Transverse colon (tissue), 4 donors: ENCODE measurements at regions of chr3 and their contacts with region 1.

Region 1: GRCh38 chr3:156674046-156674910 is at the start of gene TIPARP:
- DNase-seq: peak; percentile 100
- H3K4me3 ChIP-seq: peak within 1 kb of the TSS; percentile 69 to 98 (median 86)
- H3K27ac ChIP-seq: peak within 1 kb of the TSS; percentile 97 to 100 (median 99)
- H3K4me1 ChIP-seq: peaks cover 12 to 53% (median 23%) of the 10 kb centered on the region in 4 donors
- H3K27me3 ChIP-seq: no peaks in the 10 kb centered on the region
- CTCF ChIP-seq: peak; percentile 54 to 91 (median 71)
- EP300 ChIP-seq: peak; percentile 67
- POLR2A ChIP-seq: peak; percentile 100
- total RNA-seq, gene TIPARP: 11.9 to 47.1 (median 34.3) TPM

Region 2: DNA sequence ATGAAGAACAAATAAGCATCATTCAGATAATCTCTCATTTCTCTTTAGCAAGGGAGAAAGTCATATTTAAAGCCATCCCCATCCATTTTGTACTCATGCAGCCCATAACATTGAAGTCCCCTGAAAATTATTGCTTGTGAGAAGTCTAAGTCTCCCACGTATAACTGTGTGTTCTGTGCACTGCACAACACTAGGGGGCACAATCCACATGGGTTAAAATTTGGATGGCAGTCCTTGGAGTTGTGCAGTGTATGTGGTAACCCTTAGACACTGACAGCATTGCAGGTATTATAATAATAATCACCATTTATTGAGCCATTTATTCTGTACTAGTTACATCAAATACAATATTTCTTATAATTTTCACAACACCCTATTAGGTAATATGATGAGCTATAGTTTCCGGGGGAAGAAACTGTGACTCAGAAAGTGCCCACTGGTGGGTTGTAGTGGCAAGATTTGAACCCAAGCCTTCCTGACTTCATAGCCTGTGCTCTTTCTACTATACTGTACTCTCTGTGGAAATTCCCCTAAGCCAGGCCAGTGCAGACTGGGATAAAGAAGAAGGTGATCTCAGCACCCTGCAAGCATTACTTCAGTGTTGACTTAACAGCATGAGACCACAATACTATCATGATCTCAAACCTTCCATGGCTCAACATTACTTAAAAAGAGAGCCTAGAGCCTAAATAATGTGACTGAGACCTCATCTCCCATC is 538.2 kb before region 1 on chr3:
- in situ Hi-C with region 1: loop called in 1 of 4 experiments (anchors 25 kb)
- intact Hi-C with region 1: no loop called
- DNase-seq: no peak
- H3K4me3 ChIP-seq: no peak overlapping the region
- H3K27ac ChIP-seq: no peak overlapping the region
- H3K4me1 ChIP-seq: no peaks in the 10 kb centered on the region
- H3K27me3 ChIP-seq: no peaks in the 10 kb centered on the region
- CTCF ChIP-seq: no peak
- EP300 ChIP-seq: no peak
- POLR2A ChIP-seq: no peak

Region 3: DNA sequence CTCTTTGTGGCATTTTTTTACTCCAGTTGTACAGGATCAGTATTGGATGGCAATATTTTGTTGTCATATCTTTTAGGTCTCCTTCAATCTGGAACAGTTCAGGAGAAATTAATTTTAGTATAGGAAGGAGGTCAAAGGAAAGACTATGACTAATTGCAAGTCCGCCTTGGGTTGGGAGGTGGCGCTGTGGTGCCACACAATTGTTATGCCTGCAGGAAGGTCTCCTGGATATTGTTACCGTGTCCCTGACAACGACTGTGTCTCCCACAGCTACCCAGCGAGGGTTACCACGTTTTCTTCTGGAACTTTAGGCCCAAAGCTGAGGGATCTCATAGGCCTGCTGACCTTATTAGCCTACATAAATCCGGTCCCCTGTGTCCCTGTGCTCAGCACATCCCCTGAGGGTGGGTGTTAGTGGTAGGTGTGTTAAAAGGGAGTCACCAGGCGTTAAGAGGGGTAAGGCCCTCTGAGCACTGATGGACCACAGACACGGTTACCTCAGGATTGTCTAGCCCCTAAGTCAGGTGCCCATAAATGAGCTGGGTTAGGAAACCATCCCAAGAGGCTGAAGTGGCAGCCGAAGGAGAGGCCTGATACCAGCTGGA is 522.4 kb before region 1 on chr3:
- in situ Hi-C with region 1: loop called in 3 of 4 experiments (anchors 25 kb)
- intact Hi-C with region 1: loop called (anchors 10 kb)
- DNase-seq: peak; percentile 73
- H3K4me3 ChIP-seq: no peak overlapping the region
- H3K27ac ChIP-seq: peak overlapping the region in 1 of 4 donors; percentile 14
- H3K4me1 ChIP-seq: peaks cover 0 to 11% (median 3%) of the 10 kb centered on the region in 4 donors
- H3K27me3 ChIP-seq: no peaks in the 10 kb centered on the region
- CTCF ChIP-seq: peak; percentile 67 to 77 (median 73)
- EP300 ChIP-seq: no peak
- POLR2A ChIP-seq: no peak

Region 4: GRCh38 chr3:156535162-156535627 is 139.1 kb before region 1 on chr3:
- in situ Hi-C with region 1: no loop called
- intact Hi-C with region 1: loop called (anchors 5 kb)
- DNase-seq: peak; percentile 51
- H3K4me3 ChIP-seq: no peak overlapping the region
- H3K27ac ChIP-seq: peak overlapping the region; percentile 69 to 76 (median 74)
- H3K4me1 ChIP-seq: peaks cover 8 to 17% (median 15%) of the 10 kb centered on the region in 4 donors
- H3K27me3 ChIP-seq: no peaks in the 10 kb centered on the region
- CTCF ChIP-seq: peak in 1 of 5 experiments; percentile 28
- EP300 ChIP-seq: no peak
- POLR2A ChIP-seq: peak; percentile 10

Region 5: DNA sequence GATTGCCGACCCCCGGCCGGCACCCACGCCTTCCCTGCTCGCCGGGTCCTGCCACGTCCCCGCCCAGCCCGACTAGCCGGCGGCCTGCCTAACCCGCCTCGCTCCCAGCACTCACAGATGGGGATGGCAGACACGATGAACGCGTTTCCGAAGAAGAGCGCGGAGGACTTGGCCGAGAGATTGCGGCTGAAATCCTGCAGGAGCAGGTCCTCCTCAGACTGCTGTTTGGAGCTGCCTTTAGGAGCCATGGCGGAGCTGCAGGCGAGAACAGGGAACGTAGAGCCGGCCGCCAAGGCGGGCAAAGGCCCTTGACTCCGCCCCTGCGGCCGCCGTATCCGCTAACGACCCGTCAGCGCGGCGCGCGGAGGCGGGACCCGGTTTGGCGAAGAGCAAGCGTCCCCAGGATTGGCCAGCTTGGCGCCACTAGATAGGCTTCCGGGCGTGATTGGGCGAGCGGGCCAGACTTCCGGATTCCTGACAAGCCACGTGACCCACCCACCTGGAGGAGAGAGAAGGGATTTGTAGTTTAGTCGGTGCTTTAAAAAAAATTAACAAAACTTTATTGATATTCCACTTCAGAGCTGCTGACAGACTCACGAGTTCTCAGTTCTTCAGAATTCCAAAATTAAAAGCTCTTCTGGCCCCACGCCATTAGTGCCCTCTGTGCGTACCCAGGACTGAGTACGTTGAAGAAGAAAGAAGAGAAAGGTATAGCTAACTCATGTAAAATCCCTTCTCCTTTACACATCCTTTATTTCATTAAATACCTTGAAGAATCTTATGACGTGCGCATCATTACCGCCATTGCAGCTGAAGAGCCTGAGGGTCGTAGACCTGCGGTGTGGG is 119.2 kb before region 1 on chr3 and contains the start of gene SSR3:
- in situ Hi-C with region 1: loop called (anchors 10 to 25 kb)
- intact Hi-C with region 1: no loop called
- DNase-seq: peak; percentile 99
- H3K4me3 ChIP-seq: peak within 1 kb of the TSS; percentile 69 to 95 (median 76)
- H3K27ac ChIP-seq: peak within 1 kb of the TSS; percentile 89 to 97 (median 90)
- H3K4me1 ChIP-seq: peaks cover 8 to 43% (median 25%) of the 10 kb centered on the region in 4 donors
- H3K27me3 ChIP-seq: no peaks in the 10 kb centered on the region
- CTCF ChIP-seq: peak; percentile 37 to 92 (median 45)
- EP300 ChIP-seq: no peak
- POLR2A ChIP-seq: peak; percentile 91
- total RNA-seq, gene SSR3: 21.7 to 68.8 (median 50.1) TPM

Region 6: GRCh38 chr3:157159762-157160657 is 485.7 kb after region 1 on chr3 and contains the start of gene CCNL1:
- in situ Hi-C with region 1: loop called in 1 of 4 experiments (anchors 25 kb)
- intact Hi-C with region 1: no loop called
- DNase-seq: peak; percentile 98
- H3K4me3 ChIP-seq: peak within 1 kb of the TSS; percentile 79 to 99 (median 90)
- H3K27ac ChIP-seq: peak within 1 kb of the TSS; percentile 98 to 100 (median 100)
- H3K4me1 ChIP-seq: peaks cover 41 to 75% (median 51%) of the 10 kb centered on the region in 4 donors
- H3K27me3 ChIP-seq: no peaks in the 10 kb centered on the region
- CTCF ChIP-seq: peak in 2 of 5 experiments; percentile 24 to 27
- EP300 ChIP-seq: peak; percentile 90
- POLR2A ChIP-seq: peak; percentile 100
- total RNA-seq, gene CCNL1: 288 to 422 (median 308) TPM